Pancreas (tissue), 10 donors: ENCODE measurements at regions of chr9 and their contacts with region 1.

Region 1: GRCh38 chr9:114738581-114739316 is 56.8 kb upstream of the TEX48 start:
- DNase-seq: peak; percentile 43 to 70 (median 64)
- ATAC-seq: peak; percentile 90 to 100 (median 98)
- H3K4me3 ChIP-seq: no peak overlapping the region
- H3K27ac ChIP-seq: no peak overlapping the region
- H3K4me1 ChIP-seq: no peaks in the 10 kb centered on the region
- H3K27me3 ChIP-seq: peaks cover 0 to 3% (median 0%) of the 10 kb centered on the region in 4 donors
- CTCF ChIP-seq: peak; percentile 63 to 85 (median 78)

Region 2: GRCh38 chr9:114571391-114571790 is 167.4 kb before region 1 on chr9:
- intact Hi-C with region 1: no loop called
- DNase-seq: peak in 2 of 6 donors; percentile 37 to 50
- ATAC-seq: peak; percentile 47 to 80 (median 66)
- H3K4me3 ChIP-seq: no peak overlapping the region
- H3K27ac ChIP-seq: no peak overlapping the region
- H3K4me1 ChIP-seq: no peaks in the 10 kb centered on the region
- H3K27me3 ChIP-seq: no peaks in the 10 kb centered on the region
- CTCF ChIP-seq: no peak

Region 3: DNA sequence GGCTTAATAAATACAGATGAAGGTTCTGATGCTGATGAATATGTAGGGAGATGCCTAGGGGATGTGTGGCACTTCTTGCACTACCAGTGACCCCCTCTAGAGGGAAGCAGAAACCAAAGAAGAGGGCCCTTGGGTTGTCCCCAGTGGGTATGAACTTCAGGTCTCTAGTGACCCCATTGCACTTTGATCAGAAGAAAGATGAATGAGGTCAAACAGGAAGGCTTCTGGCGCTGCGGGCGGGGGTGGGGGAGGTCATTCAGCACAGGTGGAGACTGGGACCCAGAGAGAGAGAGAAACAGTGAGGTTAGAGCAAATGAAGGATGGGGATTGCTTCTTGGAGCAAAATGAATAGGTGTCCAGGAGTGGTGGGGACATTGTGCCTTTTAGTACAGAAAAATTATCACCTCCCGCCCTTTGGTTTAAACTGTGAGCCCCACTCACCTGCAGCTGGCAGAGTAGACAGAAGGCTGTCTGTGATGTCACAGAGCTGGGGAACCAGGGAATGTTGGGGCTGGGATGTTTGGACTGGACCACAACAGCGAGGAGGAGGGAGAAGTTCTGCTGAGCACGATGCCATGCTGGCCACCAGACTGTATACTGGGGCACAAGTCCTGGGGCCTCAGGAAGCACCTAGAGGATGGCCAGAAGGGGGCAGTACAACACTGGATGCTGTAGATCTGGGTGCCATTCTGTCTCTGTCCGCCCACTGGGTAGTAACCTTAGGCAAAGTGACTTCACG is 57.0 kb before region 1 on chr9 and contains the start of gene TEX48:
- intact Hi-C with region 1: no loop called
- DNase-seq: peak in 3 of 6 donors; percentile 20 to 56 (median 43)
- ATAC-seq: peak in 3 of 4 donors; percentile 83 to 92 (median 90)
- H3K4me3 ChIP-seq: no peak within 1 kb of the TSS
- H3K27ac ChIP-seq: no peak within 1 kb of the TSS
- H3K4me1 ChIP-seq: peaks cover 0 to 3% (median 0%) of the 10 kb centered on the region in 3 donors
- H3K27me3 ChIP-seq: no peaks in the 10 kb centered on the region
- CTCF ChIP-seq: peak; percentile 17 to 49 (median 43)
- total RNA-seq, gene TEX48: not detected

Region 4: DNA sequence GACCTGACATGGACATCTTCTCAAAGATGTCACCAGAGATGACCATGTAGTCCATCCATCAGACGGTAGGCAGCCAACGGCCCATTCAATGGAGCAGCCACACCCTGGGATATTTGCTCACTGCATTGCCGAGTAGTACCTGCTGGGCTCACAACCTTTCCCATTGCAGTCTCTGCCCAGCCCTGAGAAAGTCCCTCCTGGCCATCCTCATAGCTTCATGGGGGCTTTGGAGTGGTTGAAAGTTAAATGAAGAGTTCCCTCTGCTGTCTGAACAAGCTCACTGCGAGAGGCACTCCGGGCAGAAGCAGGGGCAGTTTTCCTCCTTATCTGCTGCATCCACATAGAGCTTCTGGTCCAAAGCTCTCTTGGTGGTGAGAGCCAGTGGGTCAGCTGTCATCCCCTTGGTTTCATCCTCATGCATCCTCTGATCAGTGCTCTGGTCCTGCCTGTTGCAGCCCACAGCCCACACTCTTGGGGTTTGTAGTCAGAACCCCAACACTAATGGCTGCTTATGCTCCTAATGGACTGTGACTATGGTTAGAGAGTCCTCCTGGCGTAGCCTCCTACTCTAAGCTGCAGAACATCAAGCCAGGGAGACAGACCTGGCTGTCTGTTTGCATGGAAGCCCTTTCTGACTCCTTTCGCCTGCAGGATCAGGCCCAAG is 168.3 kb after region 1 on chr9:
- intact Hi-C with region 1: loop called (anchors 2 to 10 kb)
- DNase-seq: no peak
- ATAC-seq: peak in 3 of 4 donors; percentile 48 to 57 (median 53)
- H3K4me3 ChIP-seq: no peak overlapping the region
- H3K27ac ChIP-seq: no peak overlapping the region
- H3K4me1 ChIP-seq: no peaks in the 10 kb centered on the region
- H3K27me3 ChIP-seq: no peaks in the 10 kb centered on the region
- CTCF ChIP-seq: peak in 2 of 4 donors; percentile 16 to 23